Prostate gland (tissue), 2 donors: ENCODE measurements at regions of chr5 and their contacts with region 1.

Region 1: DNA sequence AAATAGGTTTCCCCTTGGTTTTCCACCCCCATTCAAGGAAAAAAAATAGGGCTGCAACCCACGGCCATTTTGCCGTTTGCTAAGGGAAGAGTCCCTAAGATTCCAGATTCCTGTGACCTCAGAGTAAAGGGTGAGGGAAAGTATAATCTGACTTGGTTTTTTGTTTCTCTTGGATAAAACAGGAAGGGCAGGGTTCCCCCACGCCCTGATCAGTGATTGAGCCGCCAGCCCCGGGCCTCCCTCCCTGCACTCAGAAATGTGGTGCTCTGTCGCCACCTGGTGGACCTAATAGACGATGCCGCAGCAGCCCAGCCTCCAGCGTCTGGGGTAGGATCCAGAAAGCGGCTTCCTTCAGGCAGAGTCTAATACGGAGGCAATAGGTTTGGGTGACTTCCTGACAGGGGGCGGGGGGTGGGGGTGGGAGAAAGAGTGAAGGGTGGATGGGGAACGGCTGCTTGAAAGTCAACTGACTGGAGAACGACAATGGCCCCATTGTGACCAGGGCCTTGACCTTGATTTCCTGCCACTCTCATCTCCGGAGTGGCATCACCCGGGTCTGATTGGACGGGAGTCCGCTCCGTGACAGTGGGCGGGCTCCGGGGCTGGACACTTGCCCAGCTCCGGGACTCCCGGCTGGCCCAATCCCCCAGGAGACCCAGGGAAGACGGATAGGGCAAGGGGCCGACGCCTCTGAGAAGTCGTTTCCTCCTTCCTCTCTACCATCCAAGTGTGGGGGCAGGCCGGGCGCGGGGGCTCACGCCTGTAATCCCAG is 17.8 kb upstream of the CYSTM1 start:
- DNase-seq: peak; percentile 86
- H3K4me3 ChIP-seq: peak overlapping the region; percentile 5 to 8
- H3K27ac ChIP-seq: peak overlapping the region in 1 of 2 donors; percentile 0
- H3K4me1 ChIP-seq: peaks cover 3% of the 10 kb centered on the region
- H3K27me3 ChIP-seq: no peaks in the 10 kb centered on the region
- CTCF ChIP-seq: peak; percentile 83 to 93 (median 92)
- POLR2A ChIP-seq: no peak

Region 2: DNA sequence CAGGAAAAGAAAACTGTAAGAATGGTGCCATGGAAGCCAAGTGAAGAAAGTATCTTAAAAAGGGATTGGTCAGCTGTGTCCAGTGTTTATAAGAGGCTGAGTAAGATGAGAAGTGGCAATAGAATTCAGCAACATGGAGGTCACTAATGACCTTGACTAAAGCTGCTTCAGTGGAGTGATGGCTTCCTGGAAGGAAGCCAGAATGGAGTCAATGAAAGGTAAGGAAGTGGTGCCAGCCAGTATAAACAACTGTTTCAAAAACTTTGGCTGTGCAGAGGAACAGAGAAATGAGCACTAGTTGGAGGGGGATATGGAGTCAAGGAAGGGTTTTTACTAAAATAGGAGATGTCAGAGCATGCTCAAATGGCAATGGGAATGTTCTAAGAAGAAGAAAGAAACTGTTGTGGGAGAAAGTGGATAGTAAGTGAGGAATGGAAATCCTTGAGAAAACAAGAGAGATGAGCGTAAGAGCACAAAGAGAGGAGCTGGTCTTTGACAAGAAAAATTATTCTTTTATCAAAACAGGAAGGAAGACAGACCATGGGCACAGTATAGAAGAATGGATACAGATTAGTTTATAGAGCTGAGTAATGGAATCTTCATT is 103.0 kb before region 1 on chr5:
- intact Hi-C with region 1: no loop called
- DNase-seq: no peak
- H3K4me3 ChIP-seq: no peak overlapping the region
- H3K27ac ChIP-seq: no peak overlapping the region
- H3K4me1 ChIP-seq: no peaks in the 10 kb centered on the region
- H3K27me3 ChIP-seq: peaks cover 5% of the 10 kb centered on the region
- CTCF ChIP-seq: no peak
- POLR2A ChIP-seq: no peak

Region 3: DNA sequence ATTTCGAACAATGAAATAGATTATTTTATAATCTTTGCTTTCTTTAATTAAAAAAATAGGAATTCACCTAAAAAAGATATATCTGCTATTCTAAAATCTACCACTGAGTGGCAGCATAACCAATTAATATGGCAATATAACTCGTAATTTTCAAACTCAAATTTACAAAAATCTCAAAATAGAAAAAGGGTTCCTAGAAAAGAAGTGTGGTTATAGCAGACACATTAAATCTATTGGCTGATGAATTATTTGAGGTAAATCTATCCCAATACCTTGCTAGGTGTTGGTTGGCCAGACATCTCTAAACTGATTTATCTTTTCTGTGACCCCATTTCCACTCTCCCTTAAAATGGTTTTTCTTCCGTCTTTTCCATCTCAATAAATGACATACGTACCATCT is 83.9 kb before region 1 on chr5:
- intact Hi-C with region 1: loop called (anchors 1 kb)
- DNase-seq: no peak
- H3K4me3 ChIP-seq: no peak overlapping the region
- H3K27ac ChIP-seq: no peak overlapping the region
- H3K4me1 ChIP-seq: no peaks in the 10 kb centered on the region
- H3K27me3 ChIP-seq: no peaks in the 10 kb centered on the region
- CTCF ChIP-seq: peak; percentile 35 to 79 (median 72)
- POLR2A ChIP-seq: no peak

Region 4: DNA sequence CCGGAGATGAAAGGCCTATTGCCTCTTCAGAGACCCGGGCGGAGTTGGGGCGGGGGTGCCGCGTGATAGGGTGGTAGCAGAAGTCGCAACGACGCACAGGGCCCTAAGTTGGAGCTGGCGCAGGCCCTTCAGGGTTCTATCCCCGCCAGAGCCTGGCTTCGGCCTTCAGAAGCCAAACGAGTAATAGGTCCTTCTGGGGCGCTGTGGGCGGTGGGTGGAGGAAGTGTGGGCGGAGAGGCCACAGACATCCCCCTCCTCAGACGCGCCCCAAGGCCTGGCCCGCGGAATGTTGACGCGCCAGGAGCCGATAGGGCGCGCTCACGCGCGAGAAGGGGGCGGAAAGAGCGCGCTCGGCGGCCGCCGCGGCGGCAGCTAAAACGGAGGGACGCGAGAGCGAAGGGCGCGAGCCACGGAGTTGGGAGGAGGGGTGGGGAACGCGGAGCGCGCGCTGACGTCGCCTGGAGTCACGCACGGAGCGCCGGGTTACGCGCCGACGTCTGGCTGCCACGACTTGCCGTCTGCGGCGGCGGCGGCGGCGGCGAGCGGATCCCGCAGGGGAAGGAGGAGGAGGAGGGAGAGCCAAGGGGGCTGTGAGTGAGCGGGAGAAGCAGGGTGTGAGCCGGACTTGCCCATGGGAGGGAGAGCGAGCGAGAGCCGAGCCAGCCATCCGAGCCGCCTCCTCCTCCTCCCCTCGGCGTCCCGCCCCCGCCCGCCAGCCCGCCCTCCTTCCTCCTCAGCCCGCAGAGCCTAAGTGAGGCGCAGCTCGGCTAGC is 49.7 kb before region 1 on chr5:
- intact Hi-C with region 1: loop called (anchors 5 kb)
- DNase-seq: peak; percentile 92
- H3K4me3 ChIP-seq: peak overlapping the region; percentile 69 to 77
- H3K27ac ChIP-seq: peak overlapping the region; percentile 98
- H3K4me1 ChIP-seq: peaks cover 4% of the 10 kb centered on the region
- H3K27me3 ChIP-seq: no peaks in the 10 kb centered on the region
- CTCF ChIP-seq: peak in 2 of 4 experiments; percentile 37 to 43
- POLR2A ChIP-seq: peak; percentile 72

Region 5: GRCh38 chr5:140362860-140363630 is 205.8 kb after region 1 on chr5:
- intact Hi-C with region 1: no loop called
- DNase-seq: peak; percentile 61
- H3K4me3 ChIP-seq: peak overlapping the region in 1 of 2 donors; percentile 27
- H3K27ac ChIP-seq: no peak overlapping the region
- H3K4me1 ChIP-seq: no peaks in the 10 kb centered on the region
- H3K27me3 ChIP-seq: no peaks in the 10 kb centered on the region
- CTCF ChIP-seq: peak; percentile 77 to 90 (median 84)
- POLR2A ChIP-seq: no peak